ENCODE measurements at regions of chr6 and their contacts with region 1.

Region 1: DNA sequence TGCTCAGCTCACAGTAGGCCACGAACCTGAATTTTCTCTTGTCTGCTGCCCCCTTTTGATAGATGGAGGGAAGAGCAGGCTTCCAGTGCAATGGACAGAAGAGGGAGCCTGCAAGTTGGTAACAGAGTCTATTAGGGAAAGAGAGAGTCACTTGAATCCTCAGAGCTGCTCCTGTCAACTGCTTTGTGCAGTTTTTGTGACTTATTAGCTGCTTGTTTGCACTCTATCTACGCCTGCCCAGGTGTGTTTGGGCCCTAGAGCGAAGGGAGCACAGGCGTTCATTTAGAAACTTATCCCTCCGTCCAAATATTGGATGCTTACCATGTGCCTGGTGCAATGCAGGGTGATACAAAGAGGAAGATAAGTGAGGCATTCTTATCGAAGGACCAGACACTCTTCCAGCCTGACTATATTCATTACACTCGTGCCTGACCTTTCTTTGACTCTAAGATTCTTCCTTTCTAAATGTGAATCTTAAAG is 11.6 kb upstream of the SLC2A12 start:
- DNase-seq: peak in 2 of 3 donors; percentile 35 to 75
- ATAC-seq: peak; percentile 94
- H3K4me3 ChIP-seq: no peak overlapping the region
- H3K4me1 ChIP-seq: no peaks in the 10 kb centered on the region
- CTCF ChIP-seq: peak; percentile 71

Region 2: GRCh38 chr6:133923938-133924593 is 139.9 kb before region 1 on chr6:
- intact Hi-C with region 1: loop called in 1 of 2 experiments (anchors 10 kb)
- DNase-seq: peak in 1 of 3 donors; percentile 87
- ATAC-seq: peak; percentile 91
- H3K4me3 ChIP-seq: no peak overlapping the region
- H3K4me1 ChIP-seq: no peaks in the 10 kb centered on the region
- CTCF ChIP-seq: peak; percentile 32

Region 3: GRCh38 chr6:133973109-133973971 is 90.7 kb before region 1 on chr6:
- intact Hi-C with region 1: loop called (anchors 2 to 10 kb)
- DNase-seq: no peak
- ATAC-seq: peak; percentile 63
- H3K4me3 ChIP-seq: no peak overlapping the region
- H3K4me1 ChIP-seq: peaks cover 6% of the 10 kb centered on the region
- CTCF ChIP-seq: peak; percentile 50

Measured in mucosa of descending colon (tissue), 3 donors.